Mammary epithelial cell (primary cell): ENCODE measurements at regions of chr22 and their contacts with region 1.

Region 1: GRCh38 chr22:39422101-39422500 is 22.5 kb downstream of the TAB1 start:
- DNase-seq: no peak
- H3K4me3 ChIP-seq: no peak overlapping the region
- H3K27ac ChIP-seq: no peak overlapping the region
- H3K4me1 ChIP-seq: no peaks in the 10 kb centered on the region
- H3K27me3 ChIP-seq: no peaks in the 10 kb centered on the region
- CTCF ChIP-seq: no peak

Region 2: GRCh38 chr22:39384750-39385480 is 37.2 kb before region 1 on chr22:
- CTCF ChIA-PET with region 1: no interaction called
- dilution Hi-C with region 1: loop called (anchors 5 kb)
- in situ Hi-C with region 1: no loop called
- intact Hi-C with region 1: no loop called
- DNase-seq: no peak
- H3K4me3 ChIP-seq: no peak overlapping the region
- H3K27ac ChIP-seq: no peak overlapping the region
- H3K4me1 ChIP-seq: peaks cover 5% of the 10 kb centered on the region
- H3K27me3 ChIP-seq: no peaks in the 10 kb centered on the region
- CTCF ChIP-seq: peak in 1 of 2 donors; percentile 2

Region 3: DNA sequence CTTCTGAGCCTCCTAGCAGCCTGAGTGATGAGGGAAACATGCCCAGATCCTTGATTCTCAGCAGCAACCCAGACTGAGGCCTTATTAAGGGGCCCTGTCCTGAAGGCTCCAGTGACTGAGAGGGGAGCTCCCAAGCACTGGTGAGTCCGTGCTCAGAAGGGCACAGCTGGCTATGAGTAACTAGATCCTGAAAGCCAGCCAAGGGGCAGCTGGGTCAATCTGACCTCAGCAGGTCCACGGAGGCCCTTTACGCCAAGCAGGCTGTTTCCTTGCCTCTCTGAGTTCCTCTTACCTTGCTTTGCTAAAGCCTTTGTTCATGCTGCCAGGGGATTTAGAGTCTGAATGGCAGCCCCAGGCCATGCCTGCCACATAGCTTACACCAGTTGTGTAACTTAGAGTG is 60.7 kb after region 1 on chr22:
- CTCF ChIA-PET with region 1: no interaction called
- dilution Hi-C with region 1: loop called (anchors 5 kb)
- in situ Hi-C with region 1: no loop called
- intact Hi-C with region 1: no loop called
- DNase-seq: no peak
- H3K4me3 ChIP-seq: no peak overlapping the region
- H3K27ac ChIP-seq: no peak overlapping the region
- H3K4me1 ChIP-seq: no peaks in the 10 kb centered on the region
- H3K27me3 ChIP-seq: no peaks in the 10 kb centered on the region
- CTCF ChIP-seq: no peak

Region 4: GRCh38 chr22:41157083-41157482 is 1735.0 kb after region 1 on chr22:
- CTCF ChIA-PET with region 1: no interaction called
- dilution Hi-C with region 1: no loop called
- in situ Hi-C with region 1: no loop called
- intact Hi-C with region 1: no loop called
- DNase-seq: no peak
- H3K4me3 ChIP-seq: no peak overlapping the region
- H3K27ac ChIP-seq: no peak overlapping the region
- H3K4me1 ChIP-seq: no peaks in the 10 kb centered on the region
- H3K27me3 ChIP-seq: no peaks in the 10 kb centered on the region
- CTCF ChIP-seq: no peak